Calu3 (cell line): ENCODE measurements at regions of chr11 and their contacts with region 1.

Region 1: DNA sequence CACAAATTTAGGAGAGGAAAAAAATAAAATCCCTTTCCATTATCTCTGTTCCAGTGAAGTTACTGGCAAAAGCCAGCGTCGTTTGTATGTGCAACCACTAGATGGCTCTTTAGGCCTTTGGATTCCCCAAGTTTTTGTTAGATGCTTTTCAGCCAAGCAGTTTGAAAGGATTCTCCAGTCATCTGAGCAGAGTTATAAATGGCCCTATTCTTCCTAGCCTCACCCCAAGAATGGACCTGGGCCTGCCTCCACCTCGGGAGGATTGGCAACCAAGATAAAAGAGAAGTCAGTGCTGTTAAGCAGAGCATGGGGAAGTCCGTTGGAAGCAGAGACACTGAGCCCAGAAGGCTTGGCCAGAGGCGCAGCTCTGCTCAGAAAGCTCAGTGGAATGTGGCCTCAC is 15.4 kb downstream of the FAM181B start:
- DNase-seq: peak; percentile 5
- H3K4me3 Mint-ChIP-seq: no peak overlapping the region
- H3K27ac Mint-ChIP-seq: no peak overlapping the region
- H3K4me1 Mint-ChIP-seq: no peaks in the 10 kb centered on the region
- H3K27me3 Mint-ChIP-seq: no peaks in the 10 kb centered on the region
- CTCF ChIP-seq: peak; percentile 28

Region 2: DNA sequence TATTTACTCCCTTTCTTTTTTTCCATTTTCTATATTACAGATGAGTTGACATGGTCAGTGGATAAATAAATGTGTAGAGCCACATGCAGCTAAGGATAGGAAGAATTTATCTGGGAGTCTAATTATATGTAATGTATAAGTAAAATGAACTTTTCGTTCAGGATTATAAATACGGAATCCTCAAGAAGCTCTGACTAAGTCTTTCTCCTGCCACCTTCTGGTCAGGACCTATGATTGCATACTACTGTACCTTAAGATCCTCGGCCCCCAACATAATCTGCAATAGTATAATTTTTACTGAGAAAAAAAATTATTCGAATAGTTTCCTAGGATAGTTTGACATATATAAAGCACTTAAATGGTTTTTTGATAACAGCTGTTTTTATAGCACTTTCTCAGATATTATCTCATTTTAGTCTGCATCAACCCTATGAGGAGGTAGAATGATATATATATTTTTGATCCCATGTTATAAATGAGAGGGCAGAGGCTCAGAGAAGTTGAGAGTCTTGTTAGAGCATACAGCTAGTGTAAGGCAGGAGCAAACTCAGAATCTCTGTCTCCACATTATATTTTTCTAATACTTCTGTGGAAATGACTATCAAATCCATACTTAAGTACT is 531.8 kb after region 1 on chr11:
- CTCF ChIA-PET with region 1: no interaction called
- intact Hi-C with region 1: loop called (anchors 10 kb)
- DNase-seq: no peak
- H3K4me3 Mint-ChIP-seq: no peak overlapping the region
- H3K27ac Mint-ChIP-seq: no peak overlapping the region
- H3K4me1 Mint-ChIP-seq: peaks cover 4% of the 10 kb centered on the region
- H3K27me3 Mint-ChIP-seq: no peaks in the 10 kb centered on the region
- CTCF ChIP-seq: no peak

Region 3: GRCh38 chr11:83813296-83813695 is 1095.0 kb after region 1 on chr11:
- CTCF ChIA-PET with region 1: no interaction called
- intact Hi-C with region 1: loop called (anchors 5 kb)
- DNase-seq: no peak
- H3K4me3 Mint-ChIP-seq: no peak overlapping the region
- H3K27ac Mint-ChIP-seq: no peak overlapping the region
- H3K4me1 Mint-ChIP-seq: no peaks in the 10 kb centered on the region
- H3K27me3 Mint-ChIP-seq: peaks cover 29% of the 10 kb centered on the region
- CTCF ChIP-seq: no peak